Endothelial cell of umbilical vein (primary cell): ENCODE measurements at regions of chr2 and their contacts with region 1.

Region 1: DNA sequence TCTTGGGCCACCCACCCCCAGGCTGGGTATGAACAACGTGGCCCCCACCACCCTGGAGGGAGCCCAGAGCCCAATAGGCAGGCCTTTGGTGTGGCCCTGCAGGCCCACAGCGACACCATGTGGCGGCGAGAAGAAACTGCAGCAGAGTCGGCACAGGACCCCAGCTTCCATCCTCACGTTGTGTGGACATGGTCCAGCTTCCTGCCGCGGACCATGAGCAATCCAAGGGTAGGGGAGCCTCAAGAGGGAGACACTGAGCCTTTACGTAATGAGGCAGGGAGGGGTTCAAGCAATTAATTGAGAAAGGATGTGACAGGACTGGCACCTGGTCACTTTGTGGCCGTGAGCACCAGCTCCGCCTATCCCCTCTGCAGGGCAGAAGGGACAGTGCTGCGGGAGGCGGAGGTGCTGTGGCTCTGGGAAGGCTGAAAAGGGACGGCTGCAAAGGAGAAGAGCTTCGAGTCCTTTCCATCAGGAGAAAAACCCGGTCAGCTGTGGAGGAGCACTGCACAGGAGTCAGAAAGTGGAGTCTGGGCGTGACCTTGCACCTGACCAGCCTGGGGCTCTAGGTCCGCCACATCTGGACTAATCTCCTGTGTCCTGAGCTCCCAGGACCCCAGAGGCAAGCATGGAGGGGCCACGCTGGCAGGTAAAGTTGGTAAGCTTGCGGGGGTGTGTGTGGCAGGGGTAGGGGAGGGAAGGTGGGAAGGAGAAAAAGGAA is 44.8 kb downstream of the TMEM37 start:
- DNase-seq: peak; percentile 71
- H3K4me3 ChIP-seq: no peak overlapping the region
- H3K27ac ChIP-seq: no peak overlapping the region
- H3K4me1 ChIP-seq: no peaks in the 10 kb centered on the region
- H3K27me3 ChIP-seq: peaks cover 0 to 3% of the 10 kb centered on the region in 2 experiments
- CTCF ChIP-seq: peak; percentile 93 to 97
- POLR2A ChIP-seq: no peak

Region 2: DNA sequence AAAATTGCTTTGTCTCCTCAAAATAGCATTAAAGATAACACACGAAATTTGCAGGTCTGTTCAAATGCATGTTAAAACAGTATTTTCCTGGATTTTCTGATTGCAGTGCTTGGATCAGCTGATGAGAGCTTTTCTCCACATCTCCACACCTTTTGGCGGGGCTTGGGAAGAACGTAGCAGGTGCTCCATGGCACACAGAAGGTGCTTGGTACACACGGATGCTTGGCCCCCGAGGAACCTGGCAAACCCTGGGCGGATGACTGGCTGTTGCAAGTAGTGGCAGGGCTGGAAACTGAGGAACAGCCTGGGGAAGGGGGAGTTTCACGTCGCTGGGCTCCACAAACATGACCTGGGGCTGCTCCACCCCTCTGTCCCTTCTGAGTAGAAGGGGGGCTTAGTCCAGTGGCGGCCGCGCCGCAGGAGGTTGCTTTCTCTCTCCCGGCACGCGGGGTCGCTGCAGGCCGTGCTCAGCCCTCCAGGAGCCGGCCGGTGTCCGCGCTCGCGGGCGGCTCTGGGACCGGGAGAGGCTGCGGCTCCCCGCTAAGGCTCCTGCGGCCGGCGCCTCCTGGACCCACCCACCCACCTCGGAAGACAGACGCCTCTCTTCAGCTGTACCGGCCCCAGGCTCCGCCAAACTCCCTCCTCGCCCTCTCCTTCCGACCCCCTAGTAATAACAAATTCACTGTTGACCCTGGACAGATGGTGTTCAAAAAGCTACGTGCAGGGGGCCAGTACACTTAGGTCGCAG is 465.1 kb before region 1 on chr2:
- CTCF ChIA-PET with region 1: no interaction called
- POLR2A ChIA-PET with region 1: no interaction called
- dilution Hi-C with region 1: no loop called
- intact Hi-C with region 1: loop called (anchors 5 kb)
- DNase-seq: peak; percentile 10
- H3K4me3 ChIP-seq: no peak overlapping the region
- H3K27ac ChIP-seq: no peak overlapping the region
- H3K4me1 ChIP-seq: no peaks in the 10 kb centered on the region
- H3K27me3 ChIP-seq: no peaks in the 10 kb centered on the region
- CTCF ChIP-seq: peak; percentile 31 to 64
- POLR2A ChIP-seq: no peak

Region 3: GRCh38 chr2:119290859-119291587 is 185.4 kb before region 1 on chr2:
- CTCF ChIA-PET with region 1: interaction called, 3 read pairs
- POLR2A ChIA-PET with region 1: no interaction called
- dilution Hi-C with region 1: no loop called
- intact Hi-C with region 1: loop called (anchors 5 kb)
- DNase-seq: peak; percentile 56
- H3K4me3 ChIP-seq: no peak overlapping the region
- H3K27ac ChIP-seq: no peak overlapping the region
- H3K4me1 ChIP-seq: no peaks in the 10 kb centered on the region
- H3K27me3 ChIP-seq: no peaks in the 10 kb centered on the region
- CTCF ChIP-seq: peak; percentile 57 to 85
- POLR2A ChIP-seq: no peak

Region 4: GRCh38 chr2:119407430-119408220 is 68.8 kb before region 1 on chr2:
- CTCF ChIA-PET with region 1: interaction called, 151 read pairs
- POLR2A ChIA-PET with region 1: no interaction called
- dilution Hi-C with region 1: no loop called
- intact Hi-C with region 1: loop called (anchors 1 kb)
- DNase-seq: peak; percentile 67
- H3K4me3 ChIP-seq: no peak overlapping the region
- H3K27ac ChIP-seq: no peak overlapping the region
- H3K4me1 ChIP-seq: no peaks in the 10 kb centered on the region
- H3K27me3 ChIP-seq: peaks cover 2 to 3% of the 10 kb centered on the region in 2 experiments
- CTCF ChIP-seq: peak; percentile 66 to 70
- POLR2A ChIP-seq: no peak

Region 5: GRCh38 chr2:119431155-119431975 is 45.1 kb before region 1 on chr2 and contains the start of gene TMEM37:
- CTCF ChIA-PET with region 1: interaction called, 16 read pairs
- POLR2A ChIA-PET with region 1: no interaction called
- dilution Hi-C with region 1: no loop called
- intact Hi-C with region 1: loop called (anchors 1 kb)
- DNase-seq: peak; percentile 52
- H3K4me3 ChIP-seq: peak within 1 kb of the TSS; percentile 47 to 74 (median 52)
- H3K27ac ChIP-seq: no peak within 1 kb of the TSS
- H3K4me1 ChIP-seq: peaks cover 9% of the 10 kb centered on the region
- H3K27me3 ChIP-seq: peaks cover 5 to 12% of the 10 kb centered on the region in 2 experiments
- CTCF ChIP-seq: no peak
- POLR2A ChIP-seq: no peak
- total RNA-seq, gene TMEM37: 2.9 and 3.5 TPM in 2 replicates

Region 6: DNA sequence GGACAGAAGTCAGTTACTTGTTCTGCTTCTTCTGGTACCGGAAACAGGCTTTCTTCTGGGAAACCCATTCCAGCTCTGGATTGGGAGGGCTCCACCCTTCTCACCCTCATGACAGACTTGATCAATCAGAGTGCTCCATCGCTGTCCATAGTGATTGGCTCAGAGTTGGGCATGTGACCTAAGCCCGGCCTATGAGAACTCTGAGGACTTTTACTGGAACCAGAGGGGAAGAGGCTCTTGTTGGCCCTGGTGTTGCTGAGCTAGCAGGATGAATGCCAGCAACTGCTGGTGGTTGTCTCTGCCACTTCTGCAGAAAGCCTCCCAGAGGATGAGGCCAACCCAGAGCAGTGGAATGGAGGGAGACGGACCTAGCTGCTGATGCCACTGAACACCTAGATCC is 11.5 kb before region 1 on chr2:
- CTCF ChIA-PET with region 1: interaction called, 13 read pairs
- POLR2A ChIA-PET with region 1: no interaction called
- dilution Hi-C with region 1: no loop called
- intact Hi-C with region 1: no loop called
- DNase-seq: no peak
- H3K4me3 ChIP-seq: no peak overlapping the region
- H3K27ac ChIP-seq: no peak overlapping the region
- H3K4me1 ChIP-seq: no peaks in the 10 kb centered on the region
- H3K27me3 ChIP-seq: peaks cover 0 to 3% of the 10 kb centered on the region in 2 experiments
- CTCF ChIP-seq: no peak
- POLR2A ChIP-seq: no peak

Region 7: GRCh38 chr2:119795309-119796303 is 319.1 kb after region 1 on chr2:
- CTCF ChIA-PET with region 1: no interaction called
- POLR2A ChIA-PET with region 1: no interaction called
- dilution Hi-C with region 1: no loop called
- intact Hi-C with region 1: no loop called
- DNase-seq: no peak
- H3K4me3 ChIP-seq: no peak overlapping the region
- H3K27ac ChIP-seq: no peak overlapping the region
- H3K4me1 ChIP-seq: no peaks in the 10 kb centered on the region
- H3K27me3 ChIP-seq: no peaks in the 10 kb centered on the region
- CTCF ChIP-seq: no peak
- POLR2A ChIP-seq: no peak